ENCODE measurements at regions of chr2 and their contacts with region 1.

Region 1: DNA sequence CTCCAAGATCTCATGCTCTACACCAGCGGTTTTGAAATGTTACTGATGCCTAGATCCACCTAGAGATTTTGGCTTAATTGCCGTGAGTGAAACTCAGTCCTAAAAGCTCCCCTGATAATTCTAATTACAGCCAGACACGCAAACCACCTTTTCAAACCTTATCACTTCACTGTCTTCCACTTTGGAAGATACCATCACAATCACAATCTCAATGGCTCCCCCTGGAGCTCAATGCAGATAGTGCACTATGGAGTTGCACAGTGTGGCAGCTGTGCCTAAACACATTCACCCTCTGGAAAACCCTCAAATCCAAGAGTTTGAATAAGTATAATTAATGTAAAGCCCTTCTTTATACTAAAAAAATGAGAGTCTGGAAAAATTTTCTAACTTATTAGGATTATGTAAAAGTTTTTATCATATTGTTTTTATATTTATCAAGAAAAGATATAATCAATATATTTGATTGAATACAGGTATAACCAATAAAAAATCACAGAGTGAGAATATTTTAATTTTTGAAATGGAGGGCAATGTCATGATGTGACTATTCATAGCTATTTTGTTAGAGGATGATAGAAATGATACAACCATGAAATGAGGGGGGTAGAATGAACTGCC is 102.9 kb upstream of the SLC8A1 start:
- DNase-seq: peak; percentile 77
- H3K4me3 Mint-ChIP-seq: no peak overlapping the region
- H3K27ac Mint-ChIP-seq: no peak overlapping the region
- H3K4me1 Mint-ChIP-seq: no peaks in the 10 kb centered on the region
- H3K27me3 Mint-ChIP-seq: no peaks in the 10 kb centered on the region
- CTCF ChIP-seq: peak; percentile 69

Region 2: GRCh38 chr2:39837856-39838453 is 716.8 kb before region 1 on chr2:
- CTCF ChIA-PET with region 1: no interaction called
- intact Hi-C with region 1: loop called (anchors 10 kb)
- DNase-seq: peak; percentile 55
- H3K4me3 Mint-ChIP-seq: no peak overlapping the region
- H3K27ac Mint-ChIP-seq: no peak overlapping the region
- H3K4me1 Mint-ChIP-seq: no peaks in the 10 kb centered on the region
- H3K27me3 Mint-ChIP-seq: no peaks in the 10 kb centered on the region
- CTCF ChIP-seq: peak; percentile 90

Region 3: GRCh38 chr2:40212804-40213470 is 341.8 kb before region 1 on chr2:
- CTCF ChIA-PET with region 1: no interaction called
- intact Hi-C with region 1: loop called (anchors 1 kb)
- DNase-seq: no peak
- H3K4me3 Mint-ChIP-seq: no peak overlapping the region
- H3K27ac Mint-ChIP-seq: no peak overlapping the region
- H3K4me1 Mint-ChIP-seq: no peaks in the 10 kb centered on the region
- H3K27me3 Mint-ChIP-seq: no peaks in the 10 kb centered on the region
- CTCF ChIP-seq: peak; percentile 21

Measured in Calu3 (cell line).